Caco-2 (cell line): ENCODE measurements at regions of chr5 and their contacts with region 1.

Region 1: GRCh38 chr5:104412649-104413246 is 850.2 kb upstream of the NUDT12 start:
- DNase-seq: peak; percentile 59 to 61
- H3K4me3 ChIP-seq: no peak overlapping the region
- H3K4me3 Mint-ChIP-seq: no peak overlapping the region
- H3K27ac Mint-ChIP-seq: no peak overlapping the region
- H3K4me1 ChIP-seq: no peaks in the 10 kb centered on the region
- H3K4me1 Mint-ChIP-seq: peaks cover 7% of the 10 kb centered on the region
- H3K27me3 ChIP-seq: no peaks in the 10 kb centered on the region
- H3K27me3 Mint-ChIP-seq: peaks cover 5% of the 10 kb centered on the region
- CTCF ChIP-seq: peak; percentile 59 to 84

Region 2: DNA sequence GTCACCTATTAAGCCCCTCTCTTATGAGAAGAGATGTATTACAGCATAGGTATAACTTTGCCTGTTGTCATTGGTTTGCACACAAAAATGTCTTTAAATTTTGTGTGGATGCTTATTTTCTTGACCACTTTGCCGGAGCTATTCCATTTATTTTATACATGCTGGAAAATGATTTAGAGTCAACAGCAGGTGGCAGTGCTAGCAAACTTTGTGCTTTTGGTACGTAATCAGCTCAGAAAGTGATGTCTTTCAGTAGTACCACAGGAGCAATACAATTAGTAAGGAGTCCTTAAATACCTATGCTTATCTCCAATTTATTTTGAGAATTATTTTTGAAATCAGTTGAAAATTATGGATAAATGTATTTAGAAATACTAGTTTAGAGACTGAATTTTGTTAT is 830.4 kb before region 1 on chr5:
- CTCF ChIA-PET with region 1: no interaction called
- POLR2A ChIA-PET with region 1: no interaction called
- intact Hi-C with region 1: loop called (anchors 1 kb)
- DNase-seq: peak in 1 of 2 experiments; percentile 38
- H3K4me3 ChIP-seq: no peak overlapping the region
- H3K4me3 Mint-ChIP-seq: no peak overlapping the region
- H3K27ac Mint-ChIP-seq: no peak overlapping the region
- H3K4me1 ChIP-seq: no peaks in the 10 kb centered on the region
- H3K4me1 Mint-ChIP-seq: no peaks in the 10 kb centered on the region
- H3K27me3 ChIP-seq: no peaks in the 10 kb centered on the region
- H3K27me3 Mint-ChIP-seq: peaks cover 6% of the 10 kb centered on the region
- CTCF ChIP-seq: peak in 1 of 2 experiments; percentile 58

Region 3: DNA sequence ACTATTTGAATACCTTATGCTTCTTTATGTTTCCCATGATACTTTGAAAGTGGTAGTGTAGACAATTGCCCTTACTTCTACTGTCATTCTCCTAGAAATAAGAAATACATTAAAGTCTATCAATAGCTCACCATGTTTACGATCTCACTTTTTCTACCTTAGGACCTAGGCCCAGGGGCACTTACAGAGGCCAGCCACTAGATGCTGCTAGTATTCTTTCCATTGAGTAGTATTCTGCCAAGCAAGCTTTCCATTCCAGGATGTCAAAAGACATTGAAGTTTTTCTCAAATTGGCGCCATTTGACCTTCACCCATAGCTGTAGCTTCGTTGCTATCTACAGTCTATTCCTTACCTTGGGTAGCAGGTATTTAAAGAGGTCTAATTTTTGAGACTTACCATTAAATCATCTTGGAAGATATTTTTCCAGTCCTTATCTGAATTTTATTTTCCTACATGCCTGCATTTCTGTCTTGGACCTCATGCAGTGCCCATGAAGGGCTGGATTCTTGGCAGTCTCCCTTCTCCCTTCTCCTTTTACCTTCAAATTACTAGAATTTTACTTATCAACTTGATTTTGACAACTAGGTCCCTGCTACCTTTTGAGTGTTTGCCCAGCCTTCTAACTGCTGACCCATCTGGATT is 604.2 kb before region 1 on chr5:
- CTCF ChIA-PET with region 1: interaction called, 15 read pairs
- POLR2A ChIA-PET with region 1: no interaction called
- intact Hi-C with region 1: loop called (anchors 1 kb)
- DNase-seq: peak; percentile 38 to 64
- H3K4me3 ChIP-seq: no peak overlapping the region
- H3K4me3 Mint-ChIP-seq: no peak overlapping the region
- H3K27ac Mint-ChIP-seq: no peak overlapping the region
- H3K4me1 ChIP-seq: no peaks in the 10 kb centered on the region
- H3K4me1 Mint-ChIP-seq: no peaks in the 10 kb centered on the region
- H3K27me3 ChIP-seq: no peaks in the 10 kb centered on the region
- H3K27me3 Mint-ChIP-seq: no peaks in the 10 kb centered on the region
- CTCF ChIP-seq: peak; percentile 91 to 97

Region 4: GRCh38 chr5:103942587-103943186 is 470.1 kb before region 1 on chr5:
- CTCF ChIA-PET with region 1: interaction called, 5 read pairs
- POLR2A ChIA-PET with region 1: no interaction called
- intact Hi-C with region 1: loop called (anchors 1 kb)
- DNase-seq: no peak
- H3K4me3 ChIP-seq: no peak overlapping the region
- H3K4me3 Mint-ChIP-seq: no peak overlapping the region
- H3K27ac Mint-ChIP-seq: no peak overlapping the region
- H3K4me1 ChIP-seq: no peaks in the 10 kb centered on the region
- H3K4me1 Mint-ChIP-seq: no peaks in the 10 kb centered on the region
- H3K27me3 ChIP-seq: no peaks in the 10 kb centered on the region
- H3K27me3 Mint-ChIP-seq: no peaks in the 10 kb centered on the region
- CTCF ChIP-seq: peak in 1 of 2 experiments; percentile 35

Region 5: DNA sequence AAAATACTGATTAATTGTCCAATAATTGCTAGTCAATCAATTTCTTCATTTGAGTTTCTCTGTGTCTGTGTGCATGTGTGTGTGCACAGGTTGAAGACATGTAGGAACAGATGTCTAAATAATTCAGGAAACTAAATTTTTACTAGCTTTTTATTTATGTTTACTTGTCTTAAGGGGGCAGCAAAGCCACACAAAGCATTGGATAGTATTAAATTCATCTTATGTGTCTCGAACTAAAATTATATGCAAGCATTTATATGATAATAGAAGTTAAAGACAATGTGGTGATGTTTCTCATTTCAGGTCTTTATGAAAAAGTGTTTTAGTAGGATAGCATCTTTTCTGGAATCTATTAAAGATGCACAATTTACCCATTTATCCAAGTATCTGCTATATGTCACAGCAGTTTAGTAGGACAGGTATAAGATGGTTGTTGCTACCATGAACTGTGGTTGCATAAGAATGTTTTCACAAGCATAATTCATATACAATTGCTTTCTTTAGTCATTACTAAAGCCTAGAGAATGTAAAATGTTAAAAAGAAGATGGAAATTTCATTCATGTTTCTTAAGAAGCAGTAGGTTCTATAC is 65.5 kb before region 1 on chr5:
- CTCF ChIA-PET with region 1: interaction called, 5 read pairs
- POLR2A ChIA-PET with region 1: no interaction called
- intact Hi-C with region 1: loop called (anchors 1 kb)
- DNase-seq: no peak
- H3K4me3 ChIP-seq: no peak overlapping the region
- H3K4me3 Mint-ChIP-seq: no peak overlapping the region
- H3K27ac Mint-ChIP-seq: no peak overlapping the region
- H3K4me1 ChIP-seq: no peaks in the 10 kb centered on the region
- H3K4me1 Mint-ChIP-seq: no peaks in the 10 kb centered on the region
- H3K27me3 ChIP-seq: no peaks in the 10 kb centered on the region
- H3K27me3 Mint-ChIP-seq: no peaks in the 10 kb centered on the region
- CTCF ChIP-seq: no peak

Region 6: GRCh38 chr5:104843822-104844221 is 431.1 kb after region 1 on chr5:
- CTCF ChIA-PET with region 1: no interaction called
- POLR2A ChIA-PET with region 1: no interaction called
- intact Hi-C with region 1: no loop called
- DNase-seq: no peak
- H3K4me3 ChIP-seq: no peak overlapping the region
- H3K4me3 Mint-ChIP-seq: no peak overlapping the region
- H3K27ac Mint-ChIP-seq: no peak overlapping the region
- H3K4me1 ChIP-seq: peaks cover 9% of the 10 kb centered on the region; the same call in 1 of the 2 replicates
- H3K4me1 Mint-ChIP-seq: peaks cover 10% of the 10 kb centered on the region
- H3K27me3 ChIP-seq: no peaks in the 10 kb centered on the region
- H3K27me3 Mint-ChIP-seq: no peaks in the 10 kb centered on the region
- CTCF ChIP-seq: no peak